ENCODE measurements at regions of chr9 and their contacts with region 1.

Region 1: DNA sequence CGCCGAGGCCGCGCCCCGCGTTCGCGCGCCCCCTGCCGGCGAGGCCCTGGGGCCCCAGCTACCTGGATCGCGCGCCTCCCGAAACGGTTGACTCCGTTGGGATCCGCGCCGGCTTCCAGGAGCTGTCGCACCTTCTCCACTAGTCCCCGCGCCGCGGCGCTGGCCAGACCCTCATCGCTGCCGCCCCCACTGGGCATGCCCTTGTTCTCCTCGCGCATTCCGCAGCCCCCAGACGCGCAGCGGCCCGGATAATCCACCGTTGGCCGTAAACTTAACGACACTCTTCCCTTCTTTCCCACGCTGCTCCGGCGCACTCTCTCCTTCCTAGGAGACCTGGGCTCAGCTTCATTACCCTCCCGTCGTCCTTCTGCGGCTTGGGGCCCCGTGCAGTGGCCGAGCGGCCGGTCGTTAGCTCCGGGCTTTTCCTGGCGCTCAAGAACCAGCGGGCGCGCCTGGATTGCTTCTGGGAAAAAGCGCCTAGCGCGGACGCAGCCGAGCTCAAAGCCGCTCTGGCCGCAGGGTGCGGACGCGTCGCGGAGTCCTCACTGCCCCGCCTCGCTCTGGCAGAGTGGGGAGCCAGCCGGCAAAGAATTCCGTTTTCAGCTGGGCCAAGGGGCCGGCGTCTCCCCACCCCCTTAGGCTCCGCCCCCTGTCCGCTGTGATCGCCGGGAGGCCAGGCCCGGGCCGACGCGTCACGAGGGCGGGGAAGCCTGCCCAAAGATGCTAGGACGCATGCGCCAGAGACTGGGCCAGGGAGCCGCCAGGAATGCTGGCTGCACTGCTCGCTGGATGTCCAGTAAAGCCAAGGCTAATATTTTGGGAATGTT is at the start of gene CDKN2B:
- DNase-seq: peak; percentile 79
- H3K4me3 Mint-ChIP-seq: peak within 1 kb of the TSS; percentile 82
- H3K27ac Mint-ChIP-seq: no peak within 1 kb of the TSS
- H3K4me1 Mint-ChIP-seq: peaks cover 33% of the 10 kb centered on the region
- H3K27me3 Mint-ChIP-seq: peaks cover 50% of the 10 kb centered on the region
- total RNA-seq, gene CDKN2B: 2.5 to 3.4 TPM

Region 2: GRCh38 chr9:21812946-21813568 is 195.9 kb before region 1 on chr9:
- CTCF ChIA-PET with region 1: interaction called, 99 read pairs
- POLR2A ChIA-PET with region 1: interaction called, 4 read pairs
- DNase-seq: peak; percentile 74
- H3K4me3 Mint-ChIP-seq: no peak overlapping the region
- H3K27ac Mint-ChIP-seq: peak overlapping the region; percentile 17
- H3K4me1 Mint-ChIP-seq: peaks cover 27% of the 10 kb centered on the region
- H3K27me3 Mint-ChIP-seq: no peaks in the 10 kb centered on the region

Region 3: GRCh38 chr9:21985964-21986667 is 22.8 kb before region 1 on chr9:
- CTCF ChIA-PET with region 1: interaction called, 41 read pairs
- POLR2A ChIA-PET with region 1: no interaction called
- DNase-seq: no peak
- H3K4me3 Mint-ChIP-seq: no peak overlapping the region
- H3K27ac Mint-ChIP-seq: no peak overlapping the region
- H3K4me1 Mint-ChIP-seq: peaks cover 15% of the 10 kb centered on the region
- H3K27me3 Mint-ChIP-seq: peaks cover 45% of the 10 kb centered on the region

Region 4: GRCh38 chr9:22030101-22030598 is 21.2 kb after region 1 on chr9:
- CTCF ChIA-PET with region 1: interaction called, 23 read pairs
- POLR2A ChIA-PET with region 1: interaction called, 10 read pairs
- DNase-seq: no peak
- H3K4me3 Mint-ChIP-seq: no peak overlapping the region
- H3K27ac Mint-ChIP-seq: no peak overlapping the region
- H3K4me1 Mint-ChIP-seq: peaks cover 10% of the 10 kb centered on the region
- H3K27me3 Mint-ChIP-seq: peaks cover 21% of the 10 kb centered on the region

Region 5: DNA sequence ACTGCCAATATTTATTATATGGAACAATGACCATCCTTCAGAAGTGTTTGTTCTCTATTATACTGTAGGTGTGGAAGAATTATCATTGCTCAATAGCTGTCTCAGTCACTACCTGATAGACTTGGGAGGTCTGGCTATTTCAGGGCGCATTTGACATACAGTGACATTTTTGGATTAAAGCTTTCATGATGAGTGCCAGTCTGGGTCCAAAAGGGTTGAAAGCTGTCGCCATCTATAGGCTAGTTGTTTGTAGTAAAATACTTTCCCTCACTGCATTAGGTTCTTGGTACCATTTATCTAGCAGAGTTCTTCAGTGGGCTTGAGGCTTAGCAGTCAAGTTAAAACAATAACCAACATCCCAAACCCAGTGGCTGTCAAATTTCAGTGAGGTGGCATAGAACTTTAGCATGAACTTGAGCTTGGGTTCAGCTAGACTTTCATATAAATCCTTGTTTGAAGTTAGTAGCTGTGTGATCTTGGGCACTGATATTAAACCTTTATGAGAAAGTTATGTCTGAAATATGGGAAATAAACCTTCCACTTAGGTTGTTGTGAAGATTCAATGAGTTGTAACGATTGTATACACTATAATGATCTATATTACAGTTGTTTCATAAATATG is 110.7 kb after region 1 on chr9:
- CTCF ChIA-PET with region 1: interaction called, 41 read pairs
- POLR2A ChIA-PET with region 1: interaction called, 7 read pairs
- DNase-seq: peak; percentile 27
- H3K4me3 Mint-ChIP-seq: no peak overlapping the region
- H3K27ac Mint-ChIP-seq: no peak overlapping the region
- H3K4me1 Mint-ChIP-seq: peaks cover 19% of the 10 kb centered on the region
- H3K27me3 Mint-ChIP-seq: peaks cover 48% of the 10 kb centered on the region

Region 6: GRCh38 chr9:22244141-22245011 is 235.4 kb after region 1 on chr9:
- CTCF ChIA-PET with region 1: interaction called, 16 read pairs
- POLR2A ChIA-PET with region 1: no interaction called
- DNase-seq: peak; percentile 42
- H3K4me3 Mint-ChIP-seq: no peak overlapping the region
- H3K27ac Mint-ChIP-seq: no peak overlapping the region
- H3K4me1 Mint-ChIP-seq: peaks cover 19% of the 10 kb centered on the region
- H3K27me3 Mint-ChIP-seq: peaks cover 44% of the 10 kb centered on the region